Mammary epithelial cell (primary cell): ENCODE measurements at regions of chr6 and their contacts with region 1.

Region 1: DNA sequence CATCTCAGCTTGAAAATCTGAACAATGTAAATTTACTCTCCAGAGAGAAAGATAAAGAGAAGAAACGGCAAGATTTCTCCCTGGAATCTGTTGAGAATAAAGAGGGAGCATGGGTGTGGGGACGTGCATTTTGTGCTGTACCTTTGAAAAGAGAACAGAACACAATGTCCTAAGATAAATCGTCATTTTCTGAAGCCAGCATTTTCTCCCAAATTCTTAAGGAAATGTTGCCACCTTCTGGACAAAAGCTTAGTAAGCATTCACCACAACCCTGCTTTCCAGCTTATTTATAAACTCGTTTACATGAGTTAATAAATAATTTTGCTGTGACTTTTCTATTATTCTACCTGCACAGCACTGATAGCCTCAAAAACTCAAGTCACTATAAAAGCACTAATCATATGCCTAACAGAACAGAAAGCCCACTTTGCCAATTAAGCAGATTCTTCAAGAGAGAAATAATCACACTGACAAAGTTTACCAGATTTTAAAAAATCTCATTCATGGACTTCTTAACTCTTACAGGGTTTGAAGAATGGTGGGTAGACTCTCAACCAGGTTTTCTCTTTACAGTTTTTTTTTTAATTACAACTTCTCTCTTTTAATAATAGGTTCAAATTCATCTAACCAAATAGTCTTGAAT is 155.8 kb downstream of the MBOAT1 start:
- DNase-seq: peak; percentile 19
- H3K4me3 ChIP-seq: no peak overlapping the region
- H3K27ac ChIP-seq: no peak overlapping the region
- H3K4me1 ChIP-seq: no peaks in the 10 kb centered on the region
- H3K27me3 ChIP-seq: no peaks in the 10 kb centered on the region
- CTCF ChIP-seq: peak; percentile 64 to 67

Region 2: DNA sequence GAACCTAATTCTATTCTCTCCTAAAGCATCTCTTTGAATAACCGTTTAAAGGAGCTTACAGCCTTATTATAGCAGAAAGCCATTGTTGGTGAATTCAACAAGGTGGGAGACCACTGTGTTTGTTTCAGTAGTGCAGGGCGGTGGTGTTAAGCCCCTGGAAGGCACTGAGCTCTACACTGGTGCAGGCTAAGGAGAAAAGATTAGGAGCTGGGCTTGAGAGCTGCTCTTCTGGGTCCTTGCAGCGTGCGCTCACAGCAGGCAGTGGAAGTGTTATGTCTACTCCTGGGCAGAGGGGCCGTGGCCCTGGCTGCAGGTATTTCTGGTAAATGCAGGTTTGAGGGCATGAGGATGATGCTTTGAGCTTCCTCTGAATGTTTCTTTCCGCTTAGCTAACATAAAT is 1308.2 kb before region 1 on chr6:
- CTCF ChIA-PET with region 1: no interaction called
- dilution Hi-C with region 1: no loop called
- in situ Hi-C with region 1: no loop called
- intact Hi-C with region 1: loop called (anchors 2 kb)
- DNase-seq: no peak
- H3K4me3 ChIP-seq: no peak overlapping the region
- H3K27ac ChIP-seq: no peak overlapping the region
- H3K4me1 ChIP-seq: no peaks in the 10 kb centered on the region
- H3K27me3 ChIP-seq: peaks cover 4% of the 10 kb centered on the region
- CTCF ChIP-seq: no peak

Region 3: DNA sequence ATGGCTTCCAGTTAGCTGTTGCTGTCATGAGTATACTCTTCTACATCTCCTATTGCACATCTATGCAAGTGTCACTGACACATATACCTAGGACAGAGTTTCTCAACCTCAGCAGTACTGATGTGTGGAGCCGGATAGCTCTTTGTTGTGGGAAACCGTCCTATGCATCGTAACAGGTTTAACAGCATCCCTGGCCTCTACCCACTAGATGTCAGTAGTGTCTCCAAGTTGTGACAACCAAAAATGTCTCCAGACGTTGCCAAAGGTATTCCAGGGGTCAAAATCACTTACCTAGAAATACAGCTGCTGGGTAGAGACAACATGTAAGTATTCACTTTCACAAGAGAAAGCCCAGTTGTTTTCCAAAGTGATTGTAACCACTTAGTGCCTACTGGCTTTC is 1031.7 kb before region 1 on chr6:
- CTCF ChIA-PET with region 1: interaction called, 16 read pairs
- dilution Hi-C with region 1: no loop called
- in situ Hi-C with region 1: loop called (anchors 25 kb)
- intact Hi-C with region 1: loop called (anchors 1 kb)
- DNase-seq: peak; percentile 37
- H3K4me3 ChIP-seq: no peak overlapping the region
- H3K27ac ChIP-seq: no peak overlapping the region
- H3K4me1 ChIP-seq: no peaks in the 10 kb centered on the region
- H3K27me3 ChIP-seq: no peaks in the 10 kb centered on the region
- CTCF ChIP-seq: peak; percentile 59 to 79

Region 4: DNA sequence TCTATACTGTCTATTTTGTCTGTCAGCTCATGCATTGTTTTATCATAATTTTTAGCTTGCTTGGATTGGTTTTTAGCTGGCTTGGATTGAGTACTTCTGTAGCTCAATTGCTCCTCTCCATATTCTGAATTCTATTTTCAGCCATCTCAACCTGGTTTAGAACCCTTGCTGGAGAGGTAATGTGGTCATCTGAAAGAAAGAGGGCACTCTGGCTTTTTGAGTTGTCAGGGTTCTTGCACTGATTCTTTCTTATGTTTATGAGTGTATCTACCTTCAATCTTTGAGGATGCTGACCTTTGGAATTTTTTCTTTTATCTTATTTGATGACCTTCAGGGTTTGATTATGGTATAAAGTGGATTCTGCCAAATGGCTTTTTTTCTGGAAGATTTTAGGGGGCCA is 852.0 kb before region 1 on chr6:
- CTCF ChIA-PET with region 1: no interaction called
- dilution Hi-C with region 1: no loop called
- in situ Hi-C with region 1: no loop called
- intact Hi-C with region 1: loop called (anchors 10 kb)
- DNase-seq: no peak
- H3K4me3 ChIP-seq: no peak overlapping the region
- H3K27ac ChIP-seq: no peak overlapping the region
- H3K4me1 ChIP-seq: no peaks in the 10 kb centered on the region
- H3K27me3 ChIP-seq: no peaks in the 10 kb centered on the region
- CTCF ChIP-seq: peak in 1 of 2 donors; percentile 47

Region 5: DNA sequence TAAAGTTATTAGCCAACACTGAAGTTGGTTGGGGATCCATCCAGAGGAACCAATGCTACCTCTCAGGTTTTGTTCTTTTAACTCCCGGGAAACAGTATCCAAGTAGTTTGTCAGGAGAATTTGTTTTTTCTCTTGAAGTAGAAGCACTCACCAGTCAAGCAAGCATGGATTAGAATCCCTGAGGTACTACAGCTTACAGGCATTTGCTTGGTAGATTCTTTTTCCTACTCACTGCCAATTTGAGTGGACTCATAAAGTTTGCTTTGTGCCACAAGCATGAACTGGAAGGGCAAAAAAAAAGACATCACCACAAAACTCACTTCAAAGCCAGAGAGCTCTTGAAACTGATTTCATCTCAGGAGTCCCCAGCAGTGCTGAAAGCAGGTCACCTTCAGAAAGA is 11.6 kb before region 1 on chr6:
- CTCF ChIA-PET with region 1: interaction called, 13 read pairs
- dilution Hi-C with region 1: no loop called
- in situ Hi-C with region 1: no loop called
- intact Hi-C with region 1: no loop called
- DNase-seq: no peak
- H3K4me3 ChIP-seq: no peak overlapping the region
- H3K27ac ChIP-seq: no peak overlapping the region
- H3K4me1 ChIP-seq: no peaks in the 10 kb centered on the region
- H3K27me3 ChIP-seq: no peaks in the 10 kb centered on the region
- CTCF ChIP-seq: no peak